Naive thymus-derived CD4-positive, alpha-beta T cell (primary cell): ENCODE measurements at regions of chr17 and their contacts with region 1.

Region 1: GRCh38 chr17:42322382-42323267 is 34.3 kb downstream of the STAT5A start:
- DNase-seq: peak; percentile 80 to 95 (median 93)
- ATAC-seq: peak; percentile 100
- H3K4me3 ChIP-seq: no peak overlapping the region
- H3K4me3 Mint-ChIP-seq: peak overlapping the region in 3 of 10 donors; percentile 19 to 45 (median 27)
- H3K27ac ChIP-seq: peak overlapping the region; percentile 40
- H3K27ac Mint-ChIP-seq: peak overlapping the region; percentile 42 to 91 (median 80)
- H3K4me1 ChIP-seq: peaks cover 3 to 23% of the 10 kb centered on the region in 2 donors
- H3K4me1 Mint-ChIP-seq: peaks cover 19 to 55% (median 43%) of the 10 kb centered on the region in 7 donors
- H3K27me3 ChIP-seq: no peaks in the 10 kb centered on the region
- H3K27me3 Mint-ChIP-seq: no peaks in the 10 kb centered on the region

Region 2: GRCh38 chr17:42282478-42283320 is 39.9 kb before region 1 on chr17:
- CTCF ChIA-PET with region 1: no interaction called
- POLR2A ChIA-PET with region 1: no interaction called
- intact Hi-C with region 1: no loop called
- DNase-seq: no peak
- ATAC-seq: no peak
- H3K4me3 ChIP-seq: no peak overlapping the region
- H3K4me3 Mint-ChIP-seq: no peak overlapping the region
- H3K27ac ChIP-seq: peak overlapping the region; percentile 29
- H3K27ac Mint-ChIP-seq: peak overlapping the region in 8 of 9 donors; percentile 13 to 88 (median 78)
- H3K4me1 ChIP-seq: peaks cover 9 to 16% of the 10 kb centered on the region in 2 donors
- H3K4me1 Mint-ChIP-seq: peaks cover 19 to 47% (median 36%) of the 10 kb centered on the region in 7 donors
- H3K27me3 ChIP-seq: no peaks in the 10 kb centered on the region
- H3K27me3 Mint-ChIP-seq: no peaks in the 10 kb centered on the region

Region 3: GRCh38 chr17:42305543-42306384 is 16.9 kb before region 1 on chr17:
- CTCF ChIA-PET with region 1: interaction called, 46 read pairs
- POLR2A ChIA-PET with region 1: interaction called, 34 read pairs
- intact Hi-C with region 1: loop called in 1 of 2 experiments (anchors 2 kb)
- DNase-seq: peak in 7 of 9 donors; percentile 53 to 70 (median 64)
- ATAC-seq: peak; percentile 70
- H3K4me3 ChIP-seq: no peak overlapping the region
- H3K4me3 Mint-ChIP-seq: peak overlapping the region; percentile 52 to 78 (median 66)
- H3K27ac ChIP-seq: peak overlapping the region; percentile 40
- H3K27ac Mint-ChIP-seq: peak overlapping the region; percentile 84 to 93 (median 90)
- H3K4me1 ChIP-seq: peaks cover 0 to 20% of the 10 kb centered on the region in 2 donors
- H3K4me1 Mint-ChIP-seq: peaks cover 32 to 74% (median 53%) of the 10 kb centered on the region in 7 donors
- H3K27me3 ChIP-seq: no peaks in the 10 kb centered on the region
- H3K27me3 Mint-ChIP-seq: no peaks in the 10 kb centered on the region

Region 4: GRCh38 chr17:42337442-42337841 is 14.8 kb after region 1 on chr17:
- CTCF ChIA-PET with region 1: interaction called, 5 read pairs
- POLR2A ChIA-PET with region 1: no interaction called
- intact Hi-C with region 1: loop called (anchors 1 to 2 kb)
- DNase-seq: peak; percentile 23 to 87 (median 80)
- ATAC-seq: peak; percentile 92
- H3K4me3 ChIP-seq: no peak overlapping the region
- H3K4me3 Mint-ChIP-seq: peak overlapping the region; percentile 52 to 84 (median 72)
- H3K27ac ChIP-seq: peak overlapping the region; percentile 77
- H3K27ac Mint-ChIP-seq: peak overlapping the region; percentile 85 to 98 (median 93)
- H3K4me1 ChIP-seq: peaks cover 11 to 29% of the 10 kb centered on the region in 2 donors
- H3K4me1 Mint-ChIP-seq: peaks cover 18 to 73% (median 38%) of the 10 kb centered on the region in 7 donors
- H3K27me3 ChIP-seq: no peaks in the 10 kb centered on the region
- H3K27me3 Mint-ChIP-seq: no peaks in the 10 kb centered on the region

Region 5: DNA sequence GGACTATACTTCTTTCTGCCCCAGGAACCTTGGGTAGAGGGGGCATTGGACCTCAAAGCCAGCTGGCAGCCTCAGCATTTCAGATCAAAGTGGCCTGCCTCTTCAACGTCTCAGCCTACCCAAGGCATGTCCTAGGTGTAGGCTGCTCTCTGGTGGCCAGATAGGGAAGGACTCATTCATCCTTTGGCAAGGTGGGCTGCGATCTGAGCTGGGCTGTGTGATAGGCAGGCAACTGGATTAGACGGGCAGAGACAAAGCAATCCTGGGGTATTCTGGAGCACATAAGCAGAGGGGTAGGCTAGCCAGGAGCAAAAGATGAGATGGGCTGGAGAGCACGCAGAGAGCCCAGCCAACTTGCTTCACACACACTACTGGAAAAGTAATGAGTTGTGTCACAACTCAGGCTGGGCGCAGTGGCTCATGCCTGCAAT is 204.7 kb after region 1 on chr17:
- CTCF ChIA-PET with region 1: interaction called, 4 read pairs
- POLR2A ChIA-PET with region 1: interaction called, 3 read pairs
- intact Hi-C with region 1: loop called (anchors 1 to 2 kb)
- DNase-seq: peak in 8 of 9 donors; percentile 46 to 69 (median 62)
- ATAC-seq: peak; percentile 84
- H3K4me3 ChIP-seq: no peak overlapping the region
- H3K4me3 Mint-ChIP-seq: peak overlapping the region in 7 of 10 donors; percentile 6 to 73 (median 25)
- H3K27ac ChIP-seq: no peak overlapping the region
- H3K27ac Mint-ChIP-seq: peak overlapping the region in 8 of 9 donors; percentile 5 to 91 (median 68)
- H3K4me1 ChIP-seq: peaks cover 33 to 38% of the 10 kb centered on the region in 2 donors
- H3K4me1 Mint-ChIP-seq: peaks cover 23 to 44% (median 32%) of the 10 kb centered on the region in 7 donors
- H3K27me3 ChIP-seq: no peaks in the 10 kb centered on the region
- H3K27me3 Mint-ChIP-seq: peaks cover 0 to 4% (median 0%) of the 10 kb centered on the region in 5 donors